Breast epithelium (tissue), 4 donors: ENCODE measurements at regions of chr14 and their contacts with region 1.

Region 1: DNA sequence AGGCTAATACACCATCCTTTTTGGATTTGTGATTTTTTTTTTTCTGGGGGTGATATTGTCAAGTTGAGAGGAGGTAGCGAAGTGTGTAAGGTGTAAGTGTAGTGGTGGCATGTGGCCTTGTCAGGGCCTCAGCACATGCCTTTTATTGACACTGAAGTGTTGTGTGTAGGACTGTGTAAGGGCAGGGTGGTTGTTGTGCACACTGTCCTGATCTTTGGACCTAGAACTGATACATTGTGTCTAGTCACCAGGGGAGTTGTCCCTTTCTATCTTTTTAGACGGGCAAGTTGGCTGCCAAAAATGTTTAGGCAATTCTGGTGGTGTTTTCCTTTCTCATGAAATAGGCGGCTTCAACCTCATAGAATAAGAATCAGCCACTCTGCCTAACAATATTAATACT is 244.0 kb downstream of the NRXN3 start:
- DNase-seq: no peak
- H3K4me3 ChIP-seq: no peak overlapping the region
- H3K27ac ChIP-seq: no peak overlapping the region
- H3K4me1 ChIP-seq: no peaks in the 10 kb centered on the region
- H3K27me3 ChIP-seq: no peaks in the 10 kb centered on the region
- CTCF ChIP-seq: no peak
- POLR2A ChIP-seq: no peak

Region 2: DNA sequence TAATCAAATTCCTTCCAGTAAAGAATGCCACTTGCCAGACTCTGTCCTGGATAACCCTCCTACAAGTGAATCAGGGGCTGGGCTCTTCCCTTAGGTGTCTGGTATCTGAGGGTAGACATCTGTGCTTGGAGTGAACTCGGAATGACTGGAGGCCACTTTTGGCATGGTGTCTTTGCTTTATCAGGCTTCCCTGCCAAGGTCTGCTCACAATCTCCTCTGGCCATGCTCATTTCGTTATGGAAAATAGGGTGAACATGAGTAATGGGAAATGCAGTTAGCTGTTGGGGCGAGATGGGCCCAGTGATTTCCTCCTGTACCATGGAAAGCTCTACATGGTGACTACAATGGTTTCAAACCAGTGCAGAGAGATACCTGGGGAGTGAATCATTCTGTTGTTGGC is 31.1 kb before region 1 on chr14:
- intact Hi-C with region 1: loop called (anchors 2 kb)
- DNase-seq: no peak
- H3K4me3 ChIP-seq: no peak overlapping the region
- H3K27ac ChIP-seq: no peak overlapping the region
- H3K4me1 ChIP-seq: no peaks in the 10 kb centered on the region
- H3K27me3 ChIP-seq: no peaks in the 10 kb centered on the region
- CTCF ChIP-seq: no peak
- POLR2A ChIP-seq: no peak

Region 3: DNA sequence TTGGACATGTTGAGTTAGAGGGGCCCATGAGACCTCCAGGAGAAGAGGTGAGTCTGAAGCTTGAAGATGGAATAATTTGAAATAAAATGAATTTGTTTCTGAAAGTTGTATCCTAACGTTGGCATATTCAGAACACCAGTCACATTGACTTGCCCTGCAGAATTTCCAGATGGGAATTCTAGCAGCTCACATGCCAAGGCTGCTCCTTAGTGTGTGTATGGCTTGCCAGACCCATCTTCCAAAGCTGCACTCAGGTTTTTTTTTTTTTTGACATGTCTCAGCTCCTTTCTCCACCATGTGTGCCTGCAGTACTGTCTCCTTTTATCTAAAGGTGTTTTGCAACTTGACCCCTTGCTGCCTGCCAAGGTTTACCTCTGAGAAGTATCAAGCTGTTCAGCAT is 17.9 kb after region 1 on chr14:
- intact Hi-C with region 1: no loop called
- DNase-seq: no peak
- H3K4me3 ChIP-seq: no peak overlapping the region
- H3K27ac ChIP-seq: no peak overlapping the region
- H3K4me1 ChIP-seq: no peaks in the 10 kb centered on the region
- H3K27me3 ChIP-seq: no peaks in the 10 kb centered on the region
- CTCF ChIP-seq: no peak
- POLR2A ChIP-seq: no peak